ENCODE measurements at regions of chr19 and their contacts with region 1.

Region 1: GRCh38 chr19:34269968-34270621 is 15.7 kb downstream of the GARRE1 start:
- DNase-seq: peak; percentile 44 to 90
- ATAC-seq: peak; percentile 84 to 91 (median 90)
- H3K4me3 ChIP-seq: no peak overlapping the region
- H3K4me3 Mint-ChIP-seq: peak overlapping the region; percentile 81
- H3K27ac ChIP-seq: peak overlapping the region; percentile 82
- H3K27ac Mint-ChIP-seq: peak overlapping the region; percentile 76 to 90
- H3K4me1 ChIP-seq: peaks cover 34% of the 10 kb centered on the region
- H3K4me1 Mint-ChIP-seq: peaks cover 23 to 46% of the 10 kb centered on the region in 2 donors
- H3K27me3 ChIP-seq: no peaks in the 10 kb centered on the region
- H3K27me3 Mint-ChIP-seq: no peaks in the 10 kb centered on the region
- CTCF ChIP-seq: no peak

Region 2: GRCh38 chr19:34308381-34309367 is 38.6 kb after region 1 on chr19:
- intact Hi-C with region 1: loop called (anchors 2 kb)
- DNase-seq: peak; percentile 22 to 80
- ATAC-seq: peak; percentile 87 to 96 (median 88)
- H3K4me3 ChIP-seq: no peak overlapping the region
- H3K4me3 Mint-ChIP-seq: peak overlapping the region; percentile 82
- H3K27ac ChIP-seq: peak overlapping the region; percentile 72
- H3K27ac Mint-ChIP-seq: peak overlapping the region; percentile 93 to 95
- H3K4me1 ChIP-seq: peaks cover 18% of the 10 kb centered on the region
- H3K4me1 Mint-ChIP-seq: peaks cover 26 to 50% of the 10 kb centered on the region in 2 donors
- H3K27me3 ChIP-seq: no peaks in the 10 kb centered on the region
- H3K27me3 Mint-ChIP-seq: no peaks in the 10 kb centered on the region
- CTCF ChIP-seq: no peak

Region 3: DNA sequence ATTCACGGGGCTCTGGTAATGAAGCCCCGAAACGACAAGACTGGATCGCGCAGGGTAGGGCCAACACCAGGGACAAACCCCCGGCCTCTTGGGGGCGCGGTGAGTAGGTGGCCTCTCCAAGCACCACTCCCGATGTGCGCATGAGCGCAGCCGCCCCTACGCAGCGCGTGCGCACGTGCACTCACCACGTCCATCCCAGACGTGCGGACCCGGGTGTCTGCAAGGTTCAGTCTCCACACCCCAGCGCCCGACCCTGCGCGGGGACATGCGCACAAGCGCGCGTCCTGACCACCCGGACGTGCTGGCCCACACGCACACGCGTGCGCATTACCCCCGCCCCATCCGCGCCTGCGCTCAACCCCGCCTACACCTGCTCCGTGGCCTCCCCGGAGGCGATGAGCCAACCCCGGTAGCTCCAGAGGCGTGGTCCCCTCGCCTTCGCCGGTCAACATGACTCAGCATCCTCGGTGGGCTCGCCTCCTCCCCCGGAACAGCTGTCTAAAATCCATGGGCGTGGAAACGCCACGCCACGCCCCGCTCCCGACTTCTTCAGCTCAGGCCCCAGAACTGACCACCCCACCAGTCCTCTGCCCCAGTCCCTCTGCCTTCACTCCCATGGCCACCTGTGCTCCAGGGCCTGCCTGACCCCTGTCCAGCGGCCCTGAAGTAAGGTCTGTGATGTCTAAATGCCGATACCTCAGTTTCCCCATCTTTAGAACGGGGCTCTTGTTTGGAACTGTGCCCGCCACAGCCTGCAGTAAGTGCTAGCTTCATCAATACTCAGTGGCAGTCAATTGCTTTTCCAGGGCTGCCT is 89.3 kb after region 1 on chr19:
- intact Hi-C with region 1: no loop called
- DNase-seq: peak; percentile 85 to 96
- ATAC-seq: peak; percentile 87 to 93 (median 89)
- H3K4me3 ChIP-seq: peak overlapping the region; percentile 36
- H3K4me3 Mint-ChIP-seq: peak overlapping the region; percentile 95
- H3K27ac ChIP-seq: peak overlapping the region; percentile 69
- H3K27ac Mint-ChIP-seq: peak overlapping the region; percentile 87 to 95
- H3K4me1 ChIP-seq: peaks cover 19% of the 10 kb centered on the region
- H3K4me1 Mint-ChIP-seq: peaks cover 19 to 24% of the 10 kb centered on the region in 2 donors
- H3K27me3 ChIP-seq: no peaks in the 10 kb centered on the region
- H3K27me3 Mint-ChIP-seq: no peaks in the 10 kb centered on the region
- CTCF ChIP-seq: peak; percentile 59

Measured in natural killer cell (primary cell).